Common myeloid progenitor, CD34-positive (primary cell): ENCODE measurements at regions of chrX and their contacts with region 1.

Region 1: GRCh38 chrX:47523297-47523696 is 37.7 kb upstream of the ARAF start:
- DNase-seq: peak; percentile 70 to 71 (median 71)
- H3K4me3 ChIP-seq: peak overlapping the region; percentile 37 to 75 (median 63)
- H3K27ac ChIP-seq: no peak overlapping the region
- H3K4me1 ChIP-seq: peaks cover 0 to 7% (median under 1%) of the 10 kb centered on the region in 4 experiments
- H3K27me3 ChIP-seq: no peaks in the 10 kb centered on the region

Region 2: GRCh38 chrX:47413179-47413594 is 110.1 kb before region 1 on chrX:
- CTCF ChIA-PET with region 1: no interaction called
- POLR2A ChIA-PET with region 1: no interaction called
- DNase-seq: no peak
- H3K4me3 ChIP-seq: no peak overlapping the region
- H3K27ac ChIP-seq: no peak overlapping the region
- H3K4me1 ChIP-seq: no peaks in the 10 kb centered on the region
- H3K27me3 ChIP-seq: no peaks in the 10 kb centered on the region

Region 3: DNA sequence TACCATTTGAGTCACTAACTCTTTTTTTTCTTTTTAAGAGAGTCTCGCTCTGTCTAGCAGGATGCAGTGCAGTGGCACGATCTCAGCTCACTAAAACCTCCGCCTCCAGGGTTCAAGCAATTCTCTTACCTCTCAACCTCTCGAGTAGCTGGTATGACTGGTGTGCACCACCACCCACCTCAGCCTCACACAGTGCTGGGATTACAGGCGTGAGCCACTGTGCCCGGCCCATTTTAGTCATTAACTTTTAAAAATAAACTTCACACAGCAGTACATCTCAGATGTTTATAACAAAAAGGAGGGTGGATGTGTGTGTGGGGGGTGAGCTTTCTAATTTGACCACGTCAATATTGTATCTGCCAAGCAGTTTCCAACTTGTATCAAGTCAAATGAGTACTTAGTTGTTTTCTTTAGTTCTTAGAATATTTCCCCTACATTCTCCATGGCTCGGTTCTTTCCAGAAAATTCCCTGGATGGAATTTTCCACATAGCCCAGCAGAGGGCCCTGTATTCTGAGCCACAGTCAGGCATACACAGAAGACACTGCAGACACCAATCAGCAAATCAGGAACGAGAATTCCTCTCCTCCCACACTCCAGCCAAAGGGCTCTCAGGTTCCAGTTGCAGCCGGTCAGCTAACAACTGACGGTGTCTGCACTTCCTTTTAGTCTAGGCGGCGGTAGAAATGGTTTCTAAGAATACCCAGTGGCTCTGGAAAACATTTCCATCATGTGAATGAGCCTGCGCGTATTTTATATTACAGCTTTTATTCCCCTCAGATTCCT is 17.6 kb after region 1 on chrX:
- CTCF ChIA-PET with region 1: interaction called, 12 read pairs
- POLR2A ChIA-PET with region 1: no interaction called
- DNase-seq: peak in 2 of 3 donors; percentile 29 to 35
- H3K4me3 ChIP-seq: peak overlapping the region in 3 of 7 experiments; percentile 9 to 58 (median 23)
- H3K27ac ChIP-seq: peak overlapping the region in 1 of 2 experiments; percentile 49
- H3K4me1 ChIP-seq: peaks cover 0 to 5% (median 0%) of the 10 kb centered on the region in 4 experiments
- H3K27me3 ChIP-seq: no peaks in the 10 kb centered on the region

Region 4: GRCh38 chrX:47658684-47659515 is 135.6 kb after region 1 on chrX and contains the start of gene UXT:
- CTCF ChIA-PET with region 1: no interaction called
- POLR2A ChIA-PET with region 1: no interaction called
- DNase-seq: peak; percentile 92 to 97 (median 96)
- H3K4me3 ChIP-seq: peak within 1 kb of the TSS; percentile 18 to 85 (median 65)
- H3K27ac ChIP-seq: peak within 1 kb of the TSS; percentile 94 to 98
- H3K4me1 ChIP-seq: peaks cover 0 to 15% (median 0%) of the 10 kb centered on the region in 4 experiments
- H3K27me3 ChIP-seq: no peaks in the 10 kb centered on the region

Region 5: GRCh38 chrX:47697191-47697590 is 173.9 kb after region 1 on chrX:
- CTCF ChIA-PET with region 1: no interaction called
- POLR2A ChIA-PET with region 1: no interaction called
- DNase-seq: no peak
- H3K4me3 ChIP-seq: no peak overlapping the region
- H3K27ac ChIP-seq: no peak overlapping the region
- H3K4me1 ChIP-seq: no peaks in the 10 kb centered on the region
- H3K27me3 ChIP-seq: no peaks in the 10 kb centered on the region